ENCODE measurements at regions of chr11 and their contacts with region 1.

Region 1: DNA sequence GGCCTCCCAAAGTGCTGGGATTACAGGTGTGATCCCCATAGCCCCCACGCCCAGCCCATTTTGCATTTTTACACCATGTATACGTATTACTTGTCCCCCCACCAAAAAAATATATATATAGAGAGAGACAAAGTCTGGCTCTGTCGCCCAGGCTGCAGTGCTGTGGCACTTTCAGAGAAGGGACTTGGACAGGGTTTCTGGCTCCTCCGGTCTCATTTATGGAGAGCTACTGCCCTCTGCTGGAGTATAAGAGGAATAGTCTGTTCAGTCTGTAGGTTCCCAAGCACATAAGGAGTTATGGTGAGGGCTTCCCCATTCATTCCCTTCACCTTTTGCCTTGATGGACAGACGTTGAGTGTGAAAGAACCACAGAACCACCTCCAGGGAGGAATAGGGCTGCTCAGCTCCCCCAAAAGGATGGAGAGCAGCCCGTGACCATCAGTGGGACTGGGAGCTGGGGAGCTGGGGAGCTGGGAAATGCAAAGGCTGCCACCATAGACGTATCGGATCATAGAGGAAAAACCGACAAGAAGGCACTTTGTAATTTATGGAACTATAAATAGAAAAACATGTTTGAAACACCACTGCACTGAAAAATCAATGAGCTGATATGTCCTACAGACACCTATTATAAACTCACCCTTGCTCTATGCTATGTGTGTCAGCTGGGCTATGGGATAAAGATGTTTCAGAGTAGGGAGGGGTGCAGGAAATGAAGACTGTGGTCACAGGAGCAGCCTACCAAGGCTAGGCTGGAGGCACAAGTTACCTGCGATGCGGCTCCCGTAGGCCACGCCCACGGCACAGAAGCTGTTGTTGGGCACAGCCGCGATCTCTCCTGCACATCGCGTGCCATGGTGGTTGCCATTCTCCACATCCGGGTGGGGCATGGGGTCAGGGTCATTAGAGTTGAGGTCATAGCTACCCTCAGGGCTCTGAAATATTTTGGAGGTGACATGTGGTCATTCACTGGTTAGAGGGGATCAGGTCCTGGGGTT is 5.2 kb downstream of the PCSK7 start:
- DNase-seq: peak; percentile 86
- ATAC-seq: peak; percentile 70
- H3K4me3 ChIP-seq: no peak overlapping the region
- H3K4me3 Mint-ChIP-seq: no peak overlapping the region
- H3K27ac ChIP-seq: no peak overlapping the region
- H3K27ac Mint-ChIP-seq: peak overlapping the region; percentile 74
- H3K4me1 ChIP-seq: peaks cover 26 to 37% of the 10 kb centered on the region in 2 donors
- H3K4me1 Mint-ChIP-seq: peaks cover 35% of the 10 kb centered on the region
- H3K27me3 ChIP-seq: no peaks in the 10 kb centered on the region
- H3K27me3 Mint-ChIP-seq: no peaks in the 10 kb centered on the region
- CTCF ChIP-seq: peak; percentile 84

Region 2: GRCh38 chr11:117239300-117239699 is 12.6 kb after region 1 on chr11:
- CTCF ChIA-PET with region 1: interaction called, 13 read pairs
- POLR2A ChIA-PET with region 1: no interaction called
- intact Hi-C with region 1: no loop called
- DNase-seq: no peak
- ATAC-seq: no peak
- H3K4me3 ChIP-seq: no peak overlapping the region
- H3K4me3 Mint-ChIP-seq: no peak overlapping the region
- H3K27ac ChIP-seq: no peak overlapping the region
- H3K27ac Mint-ChIP-seq: no peak overlapping the region
- H3K4me1 ChIP-seq: no peaks in the 10 kb centered on the region
- H3K4me1 Mint-ChIP-seq: peaks cover 2% of the 10 kb centered on the region
- H3K27me3 ChIP-seq: no peaks in the 10 kb centered on the region
- H3K27me3 Mint-ChIP-seq: no peaks in the 10 kb centered on the region
- CTCF ChIP-seq: no peak